Caco-2 (cell line): ENCODE measurements at regions of chr6 and their contacts with region 1.

Region 1: DNA sequence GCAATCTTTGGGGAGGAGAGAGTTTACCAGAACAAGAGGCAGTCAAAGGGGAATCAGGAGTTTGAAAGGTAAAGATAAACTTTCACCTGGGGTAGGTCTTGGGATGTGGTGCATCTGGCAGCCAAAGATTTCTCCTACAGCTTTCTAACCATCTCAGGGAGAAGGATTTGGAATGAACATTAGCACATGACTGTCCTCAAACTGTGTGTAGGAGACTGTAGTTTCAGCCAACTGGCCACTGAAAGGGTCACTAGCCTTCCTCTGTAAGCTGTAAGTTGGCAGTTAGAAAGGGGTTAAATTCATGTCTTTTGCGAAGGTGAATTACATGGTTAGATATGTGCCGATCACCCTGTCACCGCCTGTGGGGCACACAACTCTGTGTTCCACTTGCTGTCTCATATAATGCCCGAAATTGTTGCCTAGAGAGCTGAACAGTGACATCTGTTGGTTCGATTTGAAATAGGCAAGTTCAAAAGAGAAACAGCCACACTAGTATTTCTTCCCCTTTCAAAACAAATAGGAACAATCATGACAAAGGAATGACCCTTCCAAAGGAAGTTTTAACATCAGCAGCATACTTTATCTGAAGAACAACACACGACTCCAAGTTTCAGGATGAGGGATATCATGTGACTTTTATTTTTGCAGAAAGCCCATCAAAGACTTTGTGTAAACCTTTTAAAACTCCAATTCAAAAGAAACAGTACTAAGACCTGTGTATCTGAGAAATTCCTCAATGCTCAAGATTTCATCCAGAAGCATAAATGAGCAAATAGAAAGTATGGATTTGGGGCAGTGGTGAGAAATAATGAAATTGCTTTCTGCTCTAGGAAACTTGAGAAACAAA is 1.1 kb upstream of the OPN5 start:
- DNase-seq: peak in 1 of 2 experiments; percentile 55
- H3K4me3 ChIP-seq: no peak overlapping the region
- H3K4me3 Mint-ChIP-seq: peak overlapping the region; percentile 31
- H3K27ac Mint-ChIP-seq: no peak overlapping the region
- H3K4me1 ChIP-seq: no peaks in the 10 kb centered on the region
- H3K4me1 Mint-ChIP-seq: no peaks in the 10 kb centered on the region
- H3K27me3 ChIP-seq: no peaks in the 10 kb centered on the region; the same call in 1 of the 2 replicates
- H3K27me3 Mint-ChIP-seq: peaks cover 3% of the 10 kb centered on the region
- CTCF ChIP-seq: peak; percentile 34 to 64

Region 2: DNA sequence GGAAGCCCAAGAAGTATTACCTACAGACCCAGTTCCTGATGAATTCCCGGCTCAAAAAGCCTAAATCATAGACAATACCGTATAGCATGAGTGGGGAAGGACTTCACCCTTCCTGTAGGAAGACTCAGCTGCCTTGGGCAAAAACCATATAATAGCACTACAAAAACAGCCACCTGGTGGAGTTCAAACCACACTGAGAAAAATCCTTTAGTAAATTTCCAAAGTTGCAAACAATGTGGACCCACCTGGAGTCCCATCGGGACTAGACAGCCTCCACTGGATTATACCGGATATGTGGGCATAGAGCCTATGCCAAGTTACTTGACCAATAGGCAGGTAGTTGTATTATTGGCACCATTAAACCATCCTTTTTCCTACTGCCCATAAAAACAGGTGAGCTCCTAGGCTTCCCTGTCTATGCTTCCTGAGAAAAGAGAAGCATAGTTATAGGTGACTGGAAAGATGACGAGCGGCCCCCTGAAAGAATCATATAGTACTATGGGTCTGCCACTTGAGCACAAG is 134.1 kb before region 1 on chr6:
- CTCF ChIA-PET with region 1: no interaction called
- POLR2A ChIA-PET with region 1: no interaction called
- intact Hi-C with region 1: loop called (anchors 1 kb)
- DNase-seq: no peak
- H3K4me3 ChIP-seq: no peak overlapping the region
- H3K4me3 Mint-ChIP-seq: no peak overlapping the region
- H3K27ac Mint-ChIP-seq: no peak overlapping the region
- H3K4me1 ChIP-seq: peaks cover 26% of the 10 kb centered on the region
- H3K4me1 Mint-ChIP-seq: peaks cover 15% of the 10 kb centered on the region
- H3K27me3 ChIP-seq: no peaks in the 10 kb centered on the region
- H3K27me3 Mint-ChIP-seq: no peaks in the 10 kb centered on the region
- CTCF ChIP-seq: peak in 1 of 2 experiments; percentile 8

Region 3: GRCh38 chr6:47792216-47792733 is 11.5 kb after region 1 on chr6:
- CTCF ChIA-PET with region 1: no interaction called
- POLR2A ChIA-PET with region 1: no interaction called
- intact Hi-C with region 1: no loop called
- DNase-seq: no peak
- H3K4me3 ChIP-seq: no peak overlapping the region
- H3K4me3 Mint-ChIP-seq: no peak overlapping the region
- H3K27ac Mint-ChIP-seq: no peak overlapping the region
- H3K4me1 ChIP-seq: no peaks in the 10 kb centered on the region
- H3K4me1 Mint-ChIP-seq: no peaks in the 10 kb centered on the region
- H3K27me3 ChIP-seq: no peaks in the 10 kb centered on the region
- H3K27me3 Mint-ChIP-seq: peaks cover 11% of the 10 kb centered on the region
- CTCF ChIP-seq: no peak